Posterior vena cava (tissue), 2 donors: ENCODE measurements at regions of chr9 and their contacts with region 1.

Region 1: GRCh38 chr9:129340427-129341170 is 162.5 kb upstream of the IER5L start:
- DNase-seq: no peak

Region 2: DNA sequence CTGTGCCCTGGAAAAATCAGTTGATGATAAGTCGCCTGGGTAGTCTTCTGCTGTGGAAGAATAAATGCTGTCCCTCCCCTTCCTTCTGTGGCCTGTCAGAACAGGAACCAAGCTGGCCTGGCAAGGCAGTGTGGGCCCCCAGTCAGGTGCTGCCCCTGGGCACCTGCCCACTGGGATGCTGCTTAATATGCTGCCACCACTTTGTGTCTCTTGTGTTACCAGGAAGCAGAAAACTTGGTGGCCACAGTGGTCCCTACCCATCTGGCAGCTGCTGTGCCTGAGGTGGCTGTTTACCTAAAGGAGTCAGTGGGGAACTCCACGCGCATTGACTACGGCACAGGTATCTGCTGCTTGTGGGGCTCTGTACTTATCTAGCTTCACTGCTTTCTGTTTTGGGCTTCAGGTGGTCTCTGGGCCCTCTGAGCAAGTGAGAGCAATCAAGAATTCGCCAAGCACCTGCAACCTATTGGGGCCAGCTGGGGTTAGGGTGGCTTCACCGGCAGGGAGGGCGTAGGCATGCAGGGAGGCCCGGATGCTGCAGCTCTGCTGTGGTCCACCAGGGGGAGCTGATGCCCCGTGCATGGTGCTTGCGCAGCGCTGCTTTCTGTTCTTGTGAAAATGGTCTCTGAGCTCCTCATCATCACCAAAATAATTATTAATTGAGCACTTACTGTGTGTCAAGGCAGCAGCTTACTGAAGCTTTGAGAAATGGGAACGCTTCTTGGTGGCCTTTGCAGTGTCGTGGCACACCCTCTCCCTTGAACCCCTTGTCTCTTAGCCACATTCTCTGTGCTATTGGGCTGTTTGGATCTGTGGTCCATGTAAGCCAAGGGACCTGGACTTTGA is 209.1 kb before region 1 on chr9:
- intact Hi-C with region 1: no loop called
- DNase-seq: peak; percentile 93

Region 3: GRCh38 chr9:129368434-129368978 is 27.9 kb after region 1 on chr9:
- intact Hi-C with region 1: loop called in 1 of 2 experiments (anchors 2 kb)
- DNase-seq: peak; percentile 44